Left ventricle myocardium superior (tissue), 1 donor: ENCODE measurements at regions of chr3 and their contacts with region 1.

Region 1: GRCh38 chr3:123449102-123449996 is 459 bp upstream of the ADCY5 start:
- DNase-seq: peak; percentile 72
- ATAC-seq: peak; percentile 70

Region 2: GRCh38 chr3:123344175-123344906 is 105.0 kb before region 1 on chr3:
- intact Hi-C with region 1: loop called (anchors 10 kb)
- DNase-seq: no peak
- ATAC-seq: peak; percentile 12

Region 3: DNA sequence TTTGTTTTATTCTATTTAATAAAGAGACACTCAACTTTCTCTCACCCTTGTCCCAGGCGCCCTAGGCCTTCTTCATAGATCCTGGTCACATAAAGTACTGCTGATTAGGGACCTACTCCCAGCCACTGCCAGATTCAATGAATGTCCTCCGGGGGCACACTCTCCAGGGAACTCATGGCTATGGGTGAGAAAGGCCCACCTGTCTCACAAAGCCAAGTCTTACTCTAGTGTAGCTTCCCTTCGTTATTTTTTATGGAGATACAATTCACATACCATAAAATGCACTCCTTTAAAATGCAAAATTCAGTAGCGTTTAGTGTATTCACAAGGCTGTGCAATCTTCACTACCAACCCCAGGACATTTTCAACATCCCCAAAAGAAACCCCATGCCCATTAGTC is 88.3 kb before region 1 on chr3:
- intact Hi-C with region 1: no loop called
- DNase-seq: no peak
- ATAC-seq: no peak

Region 4: GRCh38 chr3:123375014-123375940 is 74.1 kb before region 1 on chr3:
- intact Hi-C with region 1: loop called (anchors 10 kb)
- DNase-seq: no peak
- ATAC-seq: peak; percentile 50

Region 5: GRCh38 chr3:123605789-123606234 is 156.5 kb after region 1 on chr3:
- intact Hi-C with region 1: no loop called
- DNase-seq: no peak
- ATAC-seq: no peak

Region 6: GRCh38 chr3:124439603-124440002 is 990.3 kb after region 1 on chr3:
- intact Hi-C with region 1: no loop called
- DNase-seq: no peak
- ATAC-seq: no peak